GM10248 (cell line): ENCODE measurements at regions of chr2 and their contacts with region 1.

Region 1: DNA sequence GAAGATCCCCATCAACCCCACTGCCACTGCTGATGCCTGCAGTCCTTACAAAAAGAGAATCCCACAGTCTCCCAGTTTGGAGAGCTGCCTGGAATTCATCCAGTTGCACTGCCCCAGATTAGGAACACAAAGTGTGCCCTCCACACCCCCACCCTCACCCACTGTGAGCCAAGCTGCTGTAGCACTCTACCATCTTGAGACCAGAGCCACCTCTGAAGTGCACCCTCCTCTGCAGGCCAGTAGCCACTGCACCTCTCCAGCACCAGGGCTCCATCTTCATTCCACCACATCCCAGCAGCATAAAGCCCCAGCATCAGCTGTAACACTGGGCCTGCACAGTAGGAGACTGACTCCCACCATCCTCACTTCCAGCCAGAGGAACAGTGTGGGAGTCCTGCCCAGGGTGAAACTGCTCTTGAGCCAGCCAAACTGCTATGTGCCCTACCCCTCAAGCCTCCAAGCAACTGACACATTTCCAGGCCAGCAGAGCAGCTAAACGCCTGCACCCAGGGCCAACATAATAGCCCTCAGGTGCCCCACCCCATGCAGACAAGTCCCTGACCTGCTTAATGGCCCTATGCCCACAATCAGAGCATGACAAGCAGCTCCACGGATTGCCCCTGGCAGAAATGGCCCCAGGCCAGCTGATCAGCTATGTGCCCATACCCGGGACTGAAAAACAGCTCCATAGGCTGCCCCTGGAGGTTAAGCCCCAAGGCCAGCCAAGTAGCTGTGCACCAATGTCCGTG is 206.0 kb downstream of the ATAD2B start:
- DNase-seq: no peak
- CTCF ChIP-seq: no peak

Region 2: GRCh38 chr2:23703583-23704385 is 17.1 kb before region 1 on chr2:
- CTCF ChIA-PET with region 1: interaction called, 11 read pairs
- POLR2A ChIA-PET with region 1: no interaction called
- DNase-seq: no peak
- CTCF ChIP-seq: no peak

Region 3: DNA sequence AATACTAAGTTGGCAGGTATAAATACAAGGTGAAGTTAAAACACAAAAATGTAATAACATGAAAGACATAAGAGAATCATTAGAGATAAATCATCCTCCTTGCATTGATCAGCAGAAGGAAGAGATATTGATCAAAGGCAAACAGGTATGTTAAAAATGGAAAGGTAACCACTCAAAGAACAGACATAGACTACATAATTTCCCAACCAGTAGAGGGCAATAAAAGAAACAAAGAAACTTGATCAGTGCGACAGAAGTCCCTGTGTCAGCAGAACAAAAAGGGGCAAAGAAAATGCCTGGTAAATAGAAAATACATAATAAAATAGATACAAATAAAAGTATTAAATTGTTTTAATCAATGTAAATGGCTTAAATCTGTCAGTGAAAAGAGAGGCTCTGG is 507.6 kb after region 1 on chr2:
- CTCF ChIA-PET with region 1: no interaction called
- POLR2A ChIA-PET with region 1: no interaction called
- DNase-seq: no peak
- CTCF ChIP-seq: peak; percentile 25